ENCODE measurements at regions of chr14 and their contacts with region 1.

Region 1: DNA sequence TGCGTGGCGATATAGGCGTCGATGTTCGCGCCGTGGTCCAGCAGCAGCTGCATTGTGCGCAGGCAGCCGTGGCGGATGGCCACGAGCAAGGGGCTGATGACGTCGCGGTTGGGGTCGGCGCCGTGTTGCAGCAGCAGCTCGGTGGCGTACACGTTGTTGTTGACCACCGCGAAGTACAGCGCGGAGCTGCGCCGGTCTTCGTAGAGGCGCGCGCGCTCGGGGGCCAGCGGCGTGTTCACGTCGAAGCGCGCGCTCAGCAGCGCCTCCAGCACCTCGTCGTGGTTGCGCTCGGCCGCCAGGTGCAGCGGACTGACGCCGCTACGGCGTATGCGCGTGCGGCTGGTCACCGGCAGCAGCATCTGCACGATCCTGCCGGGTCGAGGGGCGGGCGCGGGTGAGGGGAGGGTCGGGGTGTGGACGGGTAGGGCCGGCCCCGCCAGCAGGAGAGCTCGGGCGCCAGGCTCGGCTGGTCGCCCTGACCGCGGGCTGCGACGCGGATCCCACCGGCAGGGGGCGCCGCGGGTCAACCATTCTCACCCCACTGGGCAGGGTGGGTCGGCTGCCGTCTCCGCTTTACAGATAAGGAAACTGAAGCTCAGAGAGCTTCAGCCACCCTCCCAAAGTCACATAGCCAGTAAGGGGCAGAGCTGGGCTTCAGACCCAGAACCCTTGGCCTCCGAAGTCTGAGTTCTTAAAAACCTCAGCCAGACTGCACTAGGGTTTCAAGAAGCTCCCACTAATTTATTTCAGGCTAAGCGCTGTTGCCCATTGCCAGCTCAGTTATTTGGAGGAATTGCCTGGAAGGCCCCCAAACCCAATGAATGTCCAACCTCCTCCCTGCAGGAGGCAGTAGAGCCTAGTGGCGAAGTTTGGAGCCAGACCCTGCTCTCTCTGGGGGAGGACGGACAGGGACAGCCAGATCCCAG is 12.4 kb downstream of the FAM181A start:
- DNase-seq: peak; percentile 93
- ATAC-seq: peak; percentile 98
- H3K4me3 Mint-ChIP-seq: peak overlapping the region; percentile 49
- H3K27ac Mint-ChIP-seq: peak overlapping the region; percentile 68
- H3K4me1 Mint-ChIP-seq: peaks cover 21% of the 10 kb centered on the region
- H3K27me3 Mint-ChIP-seq: no peaks in the 10 kb centered on the region

Region 2: DNA sequence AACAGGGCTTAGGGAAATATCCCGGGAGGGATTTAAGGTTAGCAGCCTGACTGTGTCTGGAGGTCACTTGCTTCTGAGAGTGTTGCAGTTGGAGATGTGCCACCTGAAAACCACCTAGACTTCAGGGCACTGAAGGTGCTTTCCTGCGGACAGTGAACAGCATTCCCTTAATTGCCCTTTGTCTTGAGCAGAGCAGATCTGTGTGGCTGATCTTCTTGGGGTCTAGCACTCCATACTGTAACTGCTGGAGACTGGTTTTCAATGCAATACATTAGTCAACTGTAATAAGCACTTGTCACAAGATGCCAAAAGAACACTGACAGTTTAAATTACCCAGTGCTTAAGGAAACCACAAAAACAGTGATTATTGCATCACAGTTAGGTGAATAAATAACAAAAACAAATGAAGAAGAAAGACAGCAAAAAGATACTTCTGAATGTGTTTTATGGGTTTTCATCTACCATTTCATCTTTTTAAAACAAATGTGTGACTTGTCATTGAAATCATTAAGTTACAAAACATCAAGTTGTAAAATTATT is 263.1 kb before region 1 on chr14:
- CTCF ChIA-PET with region 1: no interaction called
- POLR2A ChIA-PET with region 1: no interaction called
- DNase-seq: no peak
- ATAC-seq: no peak
- H3K4me3 Mint-ChIP-seq: no peak overlapping the region
- H3K27ac Mint-ChIP-seq: no peak overlapping the region
- H3K4me1 Mint-ChIP-seq: no peaks in the 10 kb centered on the region
- H3K27me3 Mint-ChIP-seq: peaks cover 15% of the 10 kb centered on the region

Region 3: DNA sequence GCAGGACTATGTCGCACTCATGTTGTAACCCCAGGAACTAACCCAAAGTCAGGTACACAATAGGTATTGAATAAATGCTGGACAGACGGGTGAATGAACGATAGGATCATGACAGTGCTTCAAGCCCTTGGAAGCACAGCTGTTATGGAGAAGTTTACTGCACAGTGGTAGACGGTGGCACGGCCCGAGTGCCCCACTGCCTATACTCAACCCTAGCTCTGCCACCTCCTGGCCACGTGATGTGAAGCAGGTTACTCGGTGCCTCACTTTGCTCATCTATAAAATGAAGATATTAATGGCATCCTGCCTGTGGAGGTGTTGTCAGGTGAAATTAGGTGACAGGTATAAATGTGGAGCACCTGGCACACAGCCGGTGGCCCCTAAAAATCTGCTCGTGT is 31.0 kb after region 1 on chr14:
- CTCF ChIA-PET with region 1: interaction called, 376 read pairs
- POLR2A ChIA-PET with region 1: interaction called, 25 read pairs
- DNase-seq: peak; percentile 75
- ATAC-seq: peak; percentile 76
- H3K4me3 Mint-ChIP-seq: peak overlapping the region; percentile 80
- H3K27ac Mint-ChIP-seq: peak overlapping the region; percentile 95
- H3K4me1 Mint-ChIP-seq: peaks cover 86% of the 10 kb centered on the region
- H3K27me3 Mint-ChIP-seq: no peaks in the 10 kb centered on the region

Region 4: DNA sequence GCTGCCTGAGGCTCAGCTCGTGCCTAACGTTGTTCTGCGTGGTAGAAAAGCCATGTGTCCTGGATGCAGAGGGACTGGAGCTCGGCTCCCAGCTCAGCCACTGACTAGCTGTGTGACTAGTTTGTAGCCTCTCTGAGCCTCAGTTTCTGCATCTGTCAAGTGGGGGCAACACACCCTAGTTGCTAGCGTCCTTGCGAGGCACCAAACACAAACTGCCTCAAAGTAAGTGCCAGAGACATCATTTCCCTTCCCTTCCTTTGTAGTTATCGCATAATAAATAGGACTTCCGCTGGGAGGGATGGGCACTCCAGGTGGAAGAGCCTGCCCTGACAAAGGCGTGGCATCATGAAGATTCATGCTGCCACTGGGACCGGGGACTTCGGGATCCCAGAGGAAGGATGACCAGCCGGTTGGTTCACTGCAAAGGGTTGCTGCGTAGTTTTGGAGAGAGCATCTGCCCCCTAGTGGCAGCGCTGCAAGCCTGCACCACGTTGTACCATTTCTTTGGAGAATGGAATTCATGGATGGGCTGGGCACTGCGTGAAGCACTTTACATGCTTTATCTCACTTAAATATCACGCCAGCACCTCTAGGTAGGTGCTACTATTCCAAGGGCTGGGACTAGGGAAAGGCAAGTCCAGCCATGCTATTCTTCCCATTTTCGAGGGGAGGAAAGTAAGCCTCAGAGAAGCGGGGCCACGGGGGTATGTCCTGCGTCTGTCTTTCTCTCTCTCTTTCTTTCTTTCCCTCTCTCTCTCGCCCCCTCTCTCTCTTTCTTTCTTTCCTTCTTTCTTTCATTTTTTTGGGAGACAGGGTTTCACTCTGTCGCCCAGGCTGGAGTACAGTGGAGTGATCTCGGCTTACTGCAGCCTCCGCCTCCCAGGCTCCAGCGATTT is 62.2 kb after region 1 on chr14:
- CTCF ChIA-PET with region 1: interaction called, 233 read pairs
- POLR2A ChIA-PET with region 1: interaction called, 29 read pairs
- DNase-seq: peak; percentile 70
- ATAC-seq: peak; percentile 83
- H3K4me3 Mint-ChIP-seq: no peak overlapping the region
- H3K27ac Mint-ChIP-seq: peak overlapping the region; percentile 50
- H3K4me1 Mint-ChIP-seq: peaks cover 40% of the 10 kb centered on the region
- H3K27me3 Mint-ChIP-seq: peaks cover 13% of the 10 kb centered on the region

Region 5: DNA sequence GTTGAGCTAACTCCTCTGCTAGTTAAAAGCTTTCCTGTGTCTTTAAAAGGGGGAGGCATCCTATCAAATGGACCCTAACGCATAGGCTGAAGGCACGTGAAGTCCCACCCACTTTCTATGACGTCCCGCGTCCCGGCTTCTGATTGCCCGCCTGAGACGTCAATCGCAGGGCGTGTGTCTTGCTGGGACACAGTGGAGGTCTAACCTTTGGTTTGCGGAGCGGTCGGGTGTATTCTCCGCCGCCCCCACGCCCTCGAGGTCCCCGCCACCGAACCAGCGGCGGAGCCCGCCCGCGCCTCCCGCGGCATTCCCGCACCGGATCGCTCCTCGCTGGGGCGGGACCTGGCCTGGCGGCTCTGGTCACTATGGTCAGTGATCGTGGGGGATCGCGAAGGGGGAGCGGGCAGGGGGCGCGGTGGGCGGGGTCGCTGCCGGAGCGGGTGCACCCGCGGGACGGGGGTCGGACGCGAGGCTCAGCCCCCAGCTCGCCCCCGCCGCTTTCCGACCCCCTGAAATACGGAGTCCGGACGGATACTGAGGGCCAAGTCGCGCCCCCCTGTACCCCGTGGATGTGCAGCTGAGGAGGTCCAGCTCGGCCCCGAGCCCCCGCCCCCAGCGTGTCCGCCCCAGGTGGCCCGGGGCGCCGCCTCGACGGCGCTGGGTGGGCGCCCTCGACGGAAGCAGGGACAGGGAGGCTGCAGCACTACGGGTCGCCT is 86.8 kb after region 1 on chr14 and contains the start of gene OTUB2:
- CTCF ChIA-PET with region 1: interaction called, 57 read pairs
- POLR2A ChIA-PET with region 1: no interaction called
- DNase-seq: peak; percentile 98
- ATAC-seq: peak; percentile 99
- H3K4me3 Mint-ChIP-seq: peak within 1 kb of the TSS; percentile 71
- H3K27ac Mint-ChIP-seq: peak within 1 kb of the TSS; percentile 68
- H3K4me1 Mint-ChIP-seq: peaks cover 48% of the 10 kb centered on the region
- H3K27me3 Mint-ChIP-seq: peaks cover 9% of the 10 kb centered on the region
- total RNA-seq, gene OTUB2: 1.4 to 1.7 TPM

Region 6: DNA sequence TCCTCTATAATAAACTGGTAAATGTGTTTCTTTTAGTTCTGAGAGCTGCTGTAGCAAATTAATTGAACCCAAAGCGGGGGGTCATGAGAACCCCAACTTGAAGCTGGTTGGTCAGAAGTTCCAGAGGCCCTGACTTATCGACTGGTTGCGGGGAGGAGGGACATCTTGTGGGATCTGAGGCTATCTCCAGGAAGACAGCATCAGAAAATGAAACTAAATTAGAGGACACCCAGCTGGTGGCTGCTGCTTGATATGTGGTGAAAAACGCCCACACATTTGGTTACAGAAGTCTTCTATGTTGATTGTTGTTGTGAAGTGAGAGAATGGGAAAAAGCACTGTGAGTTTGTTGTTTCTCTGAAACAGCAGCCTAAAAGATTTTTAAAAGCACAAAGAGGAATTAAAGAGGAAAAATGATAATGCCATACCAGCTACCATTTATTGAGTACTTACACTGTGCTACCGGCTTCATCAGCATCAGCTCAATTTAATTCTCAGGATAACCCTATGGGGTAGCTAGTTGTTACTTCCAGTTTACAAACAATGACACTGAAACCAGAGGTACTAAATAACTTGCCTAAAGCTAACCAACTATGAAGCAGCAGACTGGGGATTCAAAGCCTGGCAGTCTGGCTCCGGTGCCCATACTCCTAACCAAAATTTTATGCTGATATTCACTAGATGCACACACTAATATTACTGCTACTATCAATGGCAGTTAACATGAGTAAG is 117.2 kb after region 1 on chr14:
- CTCF ChIA-PET with region 1: interaction called, 23 read pairs
- POLR2A ChIA-PET with region 1: no interaction called
- DNase-seq: peak; percentile 59
- ATAC-seq: peak; percentile 66
- H3K4me3 Mint-ChIP-seq: peak overlapping the region; percentile 37
- H3K27ac Mint-ChIP-seq: peak overlapping the region; percentile 71
- H3K4me1 Mint-ChIP-seq: peaks cover 67% of the 10 kb centered on the region
- H3K27me3 Mint-ChIP-seq: no peaks in the 10 kb centered on the region

Region 7: DNA sequence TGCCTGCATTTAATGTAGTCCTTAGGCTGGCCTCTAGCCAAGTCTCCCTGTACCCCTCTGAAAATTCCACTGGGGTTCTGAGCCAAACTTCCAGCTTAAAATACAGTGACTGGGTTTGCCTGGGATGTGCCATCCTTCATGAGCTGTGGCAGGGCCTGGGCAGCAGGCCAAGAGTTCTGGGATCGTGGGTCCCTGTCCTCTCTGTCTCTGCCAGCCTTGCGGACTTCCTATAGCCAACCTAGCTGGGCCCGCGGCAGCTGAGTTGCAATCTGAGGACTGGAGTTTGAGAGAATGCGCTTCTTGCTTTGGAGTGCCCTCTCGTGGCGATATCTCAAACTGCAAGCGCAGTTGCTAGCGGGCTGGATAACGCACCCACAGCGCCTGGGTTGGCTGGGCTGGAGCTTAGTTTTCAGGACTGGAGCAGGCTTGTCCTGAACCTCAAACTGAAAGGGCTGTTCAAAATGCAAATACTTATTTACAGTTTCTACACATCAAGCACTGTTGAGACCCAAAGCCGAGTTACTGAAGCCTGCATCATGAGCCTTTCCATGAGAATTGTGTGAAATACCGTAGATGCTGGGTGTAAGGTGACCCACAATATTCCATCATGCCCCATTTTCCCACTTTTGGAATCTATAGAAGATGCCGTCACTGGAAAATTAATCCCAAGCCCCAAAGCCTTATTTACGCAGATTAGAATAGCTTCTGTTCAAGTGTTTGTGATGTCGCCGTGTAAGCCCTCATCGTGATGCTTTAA is 197.2 kb after region 1 on chr14:
- CTCF ChIA-PET with region 1: interaction called, 38 read pairs
- POLR2A ChIA-PET with region 1: no interaction called
- DNase-seq: peak; percentile 89
- ATAC-seq: peak; percentile 85
- H3K4me3 Mint-ChIP-seq: no peak overlapping the region
- H3K27ac Mint-ChIP-seq: no peak overlapping the region
- H3K4me1 Mint-ChIP-seq: peaks cover 5% of the 10 kb centered on the region
- H3K27me3 Mint-ChIP-seq: peaks cover 21% of the 10 kb centered on the region

Region 8: DNA sequence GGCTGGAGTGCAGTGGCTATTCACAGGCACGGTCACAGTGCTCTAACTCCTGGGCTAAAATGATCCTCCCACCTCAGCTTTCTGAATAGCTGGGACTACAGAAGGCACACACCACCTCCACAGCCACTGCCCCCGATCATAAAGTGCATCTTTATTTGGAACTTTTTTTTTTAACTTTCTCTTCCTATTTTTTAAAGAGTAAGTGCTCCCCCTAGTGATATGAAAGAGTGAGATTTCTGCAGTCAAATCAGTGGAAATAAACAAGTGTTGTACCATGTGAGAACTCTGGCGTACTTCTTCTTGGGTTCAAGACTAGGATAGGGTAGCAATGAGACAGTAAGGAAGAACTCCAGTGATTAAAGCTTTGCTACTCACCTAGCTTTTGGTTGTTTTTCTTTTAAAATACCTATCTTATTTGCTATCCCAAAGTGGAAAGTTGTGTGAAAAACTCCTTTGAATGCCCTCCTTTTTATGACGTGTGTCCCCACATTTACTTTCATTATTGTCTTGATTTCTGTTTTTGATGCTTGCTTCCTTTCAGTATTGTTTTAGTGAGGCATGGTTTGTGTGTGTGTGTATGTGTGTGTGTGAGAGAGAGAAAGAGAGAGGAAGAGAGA is 241.2 kb after region 1 on chr14:
- CTCF ChIA-PET with region 1: interaction called, 21 read pairs
- POLR2A ChIA-PET with region 1: no interaction called
- DNase-seq: peak; percentile 27
- ATAC-seq: peak; percentile 87
- H3K4me3 Mint-ChIP-seq: peak overlapping the region; percentile 36
- H3K27ac Mint-ChIP-seq: peak overlapping the region; percentile 0
- H3K4me1 Mint-ChIP-seq: peaks cover 9% of the 10 kb centered on the region
- H3K27me3 Mint-ChIP-seq: peaks cover 50% of the 10 kb centered on the region